Gastrocnemius medialis (tissue), 4 donors: ENCODE measurements at regions of chr9 and their contacts with region 1.

Region 1: GRCh38 chr9:124794902-124795491 is 18.1 kb downstream of the OLFML2A start:
- DNase-seq: peak; percentile 60 to 88
- ATAC-seq: peak; percentile 65 to 73
- H3K4me3 ChIP-seq: no peak overlapping the region
- H3K27ac ChIP-seq: peak overlapping the region; percentile 29 to 70 (median 62)
- H3K4me1 ChIP-seq: peaks cover 47 to 61% of the 10 kb centered on the region in 2 donors
- H3K27me3 ChIP-seq: no peaks in the 10 kb centered on the region
- CTCF ChIP-seq: peak in 4 of 5 experiments; percentile 24 to 33 (median 26)
- POLR2A ChIP-seq: no peak

Region 2: GRCh38 chr9:124743686-124744348 is 51.2 kb before region 1 on chr9:
- in situ Hi-C with region 1: no loop called
- intact Hi-C with region 1: no loop called
- DNase-seq: no peak
- ATAC-seq: no peak
- H3K4me3 ChIP-seq: no peak overlapping the region
- H3K27ac ChIP-seq: no peak overlapping the region
- H3K4me1 ChIP-seq: peaks cover 0 to 4% of the 10 kb centered on the region in 2 donors
- H3K27me3 ChIP-seq: no peaks in the 10 kb centered on the region
- CTCF ChIP-seq: no peak
- POLR2A ChIP-seq: no peak

Region 3: GRCh38 chr9:124776954-124777665 is 17.9 kb before region 1 on chr9 and contains the start of gene OLFML2A:
- in situ Hi-C with region 1: no loop called
- intact Hi-C with region 1: loop called (anchors 2 kb)
- DNase-seq: peak in 1 of 2 donors; percentile 20
- ATAC-seq: peak; percentile 12 to 28
- H3K4me3 ChIP-seq: peak within 1 kb of the TSS; percentile 37 to 73 (median 52)
- H3K27ac ChIP-seq: peak within 1 kb of the TSS; percentile 23 to 53 (median 46)
- H3K4me1 ChIP-seq: peaks cover 19 to 28% of the 10 kb centered on the region in 2 donors
- H3K27me3 ChIP-seq: no peaks in the 10 kb centered on the region
- CTCF ChIP-seq: peak in 4 of 5 experiments; percentile 29 to 50 (median 42)
- POLR2A ChIP-seq: peak; percentile 40 to 82
- total RNA-seq, gene OLFML2A: 6.9 to 48.0 (median 32.8) TPM

Region 4: DNA sequence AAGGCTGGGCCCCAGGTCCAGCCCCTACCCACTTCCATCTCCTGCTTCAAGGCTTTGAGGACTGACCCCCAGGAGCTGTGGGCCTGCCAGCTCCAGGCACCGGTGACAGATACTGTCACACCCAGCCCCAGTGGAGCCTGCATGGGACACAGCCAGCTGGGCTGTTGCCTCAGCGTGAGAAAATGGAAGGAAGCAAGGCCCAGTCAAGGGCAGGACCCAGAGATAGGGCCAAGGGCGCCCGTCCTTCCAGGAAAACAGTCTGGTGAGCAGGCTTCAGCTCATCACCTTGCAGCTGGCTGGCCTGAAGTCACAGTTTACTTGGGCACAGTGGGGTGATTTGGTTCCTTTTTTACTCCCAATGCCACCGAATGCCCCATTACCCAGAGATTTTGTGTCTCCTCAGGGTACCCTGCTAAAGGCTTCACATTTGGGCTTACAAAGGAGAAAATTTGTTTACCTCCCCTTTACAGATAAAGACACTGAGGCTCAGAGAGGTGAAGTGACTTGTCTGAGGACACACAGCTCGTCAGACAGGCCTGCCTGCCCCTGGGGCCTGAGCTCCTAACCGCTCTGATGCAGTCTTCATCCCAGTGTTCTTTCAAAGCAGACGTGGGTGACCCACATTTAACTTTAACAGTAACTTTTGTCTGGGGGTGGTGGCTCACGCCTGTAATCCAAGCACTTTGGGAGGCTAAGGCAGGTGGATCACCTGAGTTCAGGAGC is 36.8 kb after region 1 on chr9:
- in situ Hi-C with region 1: no loop called
- intact Hi-C with region 1: loop called (anchors 2 kb)
- DNase-seq: peak; percentile 55 to 78
- ATAC-seq: peak; percentile 83 to 89
- H3K4me3 ChIP-seq: no peak overlapping the region
- H3K27ac ChIP-seq: peak overlapping the region; percentile 63 to 74 (median 68)
- H3K4me1 ChIP-seq: peaks cover 39 to 40% of the 10 kb centered on the region in 2 donors
- H3K27me3 ChIP-seq: no peaks in the 10 kb centered on the region
- CTCF ChIP-seq: no peak
- POLR2A ChIP-seq: no peak

Region 5: GRCh38 chr9:124839612-124840299 is 44.8 kb after region 1 on chr9:
- in situ Hi-C with region 1: loop called in 1 of 4 experiments (anchors 10 kb)
- intact Hi-C with region 1: no loop called
- DNase-seq: peak in 1 of 2 donors; percentile 43
- ATAC-seq: peak; percentile 45 to 52
- H3K4me3 ChIP-seq: no peak overlapping the region
- H3K27ac ChIP-seq: peak overlapping the region; percentile 74 to 84 (median 80)
- H3K4me1 ChIP-seq: peaks cover 24 to 26% of the 10 kb centered on the region in 2 donors
- H3K27me3 ChIP-seq: no peaks in the 10 kb centered on the region
- CTCF ChIP-seq: peak; percentile 49 to 80 (median 65)
- POLR2A ChIP-seq: no peak